Activated CD8-positive, alpha-beta T cell treated with anti-CD3 and anti-CD28 coated beads, Interleukin-2, amount 10 ng/mL, durations not matched to agents 7 days and 5 days (primary cell): ENCODE measurements at regions of chr12 and their contacts with region 1.

Region 1: GRCh38 chr12:48988030-48988649 is 10.0 kb downstream of the WNT1 start:
- DNase-seq: peak; percentile 84
- ATAC-seq: peak; percentile 81
- H3K4me3 Mint-ChIP-seq: no peak overlapping the region
- H3K27ac Mint-ChIP-seq: no peak overlapping the region
- H3K4me1 Mint-ChIP-seq: peaks cover 8% of the 10 kb centered on the region
- H3K27me3 Mint-ChIP-seq: peaks cover 65% of the 10 kb centered on the region

Region 2: GRCh38 chr12:47797441-47797840 is 1190.7 kb before region 1 on chr12:
- CTCF ChIA-PET with region 1: no interaction called
- POLR2A ChIA-PET with region 1: no interaction called
- DNase-seq: peak; percentile 57
- ATAC-seq: peak; percentile 73
- H3K4me3 Mint-ChIP-seq: no peak overlapping the region
- H3K27ac Mint-ChIP-seq: peak overlapping the region; percentile 83
- H3K4me1 Mint-ChIP-seq: peaks cover 47% of the 10 kb centered on the region
- H3K27me3 Mint-ChIP-seq: no peaks in the 10 kb centered on the region

Region 3: DNA sequence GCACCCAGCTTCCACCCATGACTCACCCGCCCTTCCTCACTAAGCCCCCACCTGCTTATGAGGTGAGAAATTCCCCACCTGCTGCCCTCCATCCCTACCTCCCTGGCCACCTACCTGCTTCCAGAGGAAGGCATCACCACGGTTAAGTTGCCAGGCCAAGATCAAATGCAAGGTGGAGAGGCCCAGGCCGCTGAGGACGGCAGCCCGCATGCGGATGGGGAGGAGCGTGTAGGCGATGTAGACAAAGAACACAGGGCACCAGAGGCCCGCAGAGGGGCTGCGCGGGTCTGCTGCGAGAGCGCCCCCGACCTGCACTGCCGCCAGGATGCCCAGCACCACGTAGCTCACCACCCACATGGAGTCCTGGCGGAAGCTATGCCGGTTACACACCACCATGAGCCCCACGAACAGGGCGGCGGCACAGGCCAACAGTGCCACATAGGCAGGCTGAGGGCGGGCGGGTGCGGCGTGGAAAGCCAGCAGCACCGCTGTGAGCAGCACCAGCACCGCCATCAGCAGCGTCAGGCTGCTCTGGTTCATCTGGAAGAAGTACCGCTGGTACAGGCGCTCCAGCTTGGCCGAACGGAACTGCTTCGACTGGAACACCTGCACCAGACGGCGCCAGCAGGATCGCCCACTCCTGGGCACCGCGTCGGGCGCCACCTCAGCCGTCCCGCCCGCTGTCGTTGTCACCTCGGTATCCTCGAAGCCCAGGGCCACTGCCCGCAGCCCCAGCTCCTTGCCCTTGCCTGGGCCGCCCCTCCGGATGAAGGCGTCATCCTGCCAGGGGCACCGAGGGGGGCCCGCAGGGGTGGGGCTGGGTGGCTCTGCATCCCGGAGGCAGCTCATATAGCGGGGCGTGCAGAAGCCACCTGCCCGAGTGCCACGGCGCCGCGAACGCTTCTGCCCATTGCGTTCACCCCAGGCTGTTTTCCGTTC is 205.4 kb before region 1 on chr12:
- CTCF ChIA-PET with region 1: no interaction called
- POLR2A ChIA-PET with region 1: no interaction called
- DNase-seq: no peak
- ATAC-seq: no peak
- H3K4me3 Mint-ChIP-seq: no peak overlapping the region
- H3K27ac Mint-ChIP-seq: no peak overlapping the region
- H3K4me1 Mint-ChIP-seq: no peaks in the 10 kb centered on the region
- H3K27me3 Mint-ChIP-seq: peaks cover 30% of the 10 kb centered on the region

Region 4: GRCh38 chr12:48795480-48796455 is 192.4 kb before region 1 on chr12:
- CTCF ChIA-PET with region 1: no interaction called
- POLR2A ChIA-PET with region 1: no interaction called
- DNase-seq: peak; percentile 70
- ATAC-seq: peak; percentile 72
- H3K4me3 Mint-ChIP-seq: no peak overlapping the region
- H3K27ac Mint-ChIP-seq: no peak overlapping the region
- H3K4me1 Mint-ChIP-seq: peaks cover 14% of the 10 kb centered on the region
- H3K27me3 Mint-ChIP-seq: peaks cover 14% of the 10 kb centered on the region

Region 5: DNA sequence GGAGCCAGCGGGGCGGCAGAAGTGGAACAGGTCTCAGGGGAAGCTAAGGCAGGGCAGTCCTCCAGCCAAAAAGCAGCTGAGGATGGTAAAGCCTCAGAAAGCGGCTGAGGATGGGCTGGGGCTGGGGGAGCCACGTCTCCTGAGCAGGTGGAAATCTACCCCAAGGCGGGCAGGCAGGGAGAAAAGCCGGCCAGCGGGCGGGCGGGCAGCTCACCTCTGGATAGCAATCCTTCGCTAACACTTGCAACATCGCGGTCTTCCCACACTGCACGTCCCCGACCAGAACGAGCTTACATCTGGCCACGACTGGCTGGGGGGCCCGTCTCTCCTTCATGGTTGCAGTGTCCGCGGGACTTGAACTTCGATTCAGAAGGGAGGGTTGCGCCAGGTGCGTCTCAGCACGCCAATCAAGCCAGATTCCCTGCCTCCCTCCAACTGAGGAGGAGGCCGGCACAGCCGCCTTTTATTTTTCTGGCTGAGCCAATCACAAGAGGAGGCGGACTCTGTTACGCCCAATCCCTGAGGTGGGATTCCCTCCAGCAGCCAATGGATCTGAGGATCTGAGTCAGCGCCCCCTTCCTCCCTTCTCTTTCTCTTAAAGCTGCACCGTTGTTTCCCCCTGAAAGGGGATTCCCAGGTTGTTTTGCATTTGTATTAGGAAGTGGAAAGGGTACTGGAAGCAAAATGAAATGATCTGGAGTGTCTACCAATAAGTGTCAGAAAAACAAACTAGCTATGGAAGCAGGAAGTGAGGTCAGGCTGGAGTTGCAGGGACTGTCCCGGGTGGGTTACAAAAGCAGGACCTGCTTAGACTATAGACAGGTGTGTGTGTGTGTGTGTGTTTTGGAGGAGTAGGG is 122.5 kb before region 1 on chr12 and contains the start of gene RND1:
- CTCF ChIA-PET with region 1: interaction called, 12 read pairs
- POLR2A ChIA-PET with region 1: interaction called, 4 read pairs
- DNase-seq: peak; percentile 88
- ATAC-seq: peak; percentile 98
- H3K4me3 Mint-ChIP-seq: peak within 1 kb of the TSS; percentile 81
- H3K27ac Mint-ChIP-seq: peak within 1 kb of the TSS; percentile 71
- H3K4me1 Mint-ChIP-seq: peaks cover 23% of the 10 kb centered on the region
- H3K27me3 Mint-ChIP-seq: peaks cover 25% of the 10 kb centered on the region
- total RNA-seq, gene RND1: 1.4 to 2.5 TPM

Region 6: DNA sequence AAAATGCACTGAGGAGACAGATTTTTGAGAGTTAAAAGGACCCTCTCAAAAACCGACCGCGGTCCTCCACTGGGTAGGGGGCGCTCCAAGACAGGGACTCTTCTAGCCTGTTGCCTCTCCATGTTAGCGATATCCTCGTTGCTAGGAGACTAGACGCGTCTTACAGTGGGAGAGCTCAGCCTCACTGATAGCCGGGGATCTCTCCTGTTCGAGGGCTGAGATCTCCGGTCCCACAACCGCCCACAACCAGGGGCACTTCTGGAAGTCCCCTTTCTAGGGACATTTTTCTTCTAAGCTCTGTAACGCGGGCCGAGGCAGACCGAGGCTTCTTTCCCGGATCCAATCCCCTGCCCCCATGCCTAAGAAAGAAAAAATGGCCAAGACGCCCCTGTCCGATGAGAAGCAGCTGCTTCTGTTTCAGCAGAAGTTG is 84.1 kb before region 1 on chr12:
- CTCF ChIA-PET with region 1: interaction called, 10 read pairs
- POLR2A ChIA-PET with region 1: no interaction called
- DNase-seq: peak; percentile 88
- ATAC-seq: peak; percentile 97
- H3K4me3 Mint-ChIP-seq: peak overlapping the region; percentile 64
- H3K27ac Mint-ChIP-seq: no peak overlapping the region
- H3K4me1 Mint-ChIP-seq: peaks cover 12% of the 10 kb centered on the region
- H3K27me3 Mint-ChIP-seq: peaks cover 12% of the 10 kb centered on the region

Region 7: DNA sequence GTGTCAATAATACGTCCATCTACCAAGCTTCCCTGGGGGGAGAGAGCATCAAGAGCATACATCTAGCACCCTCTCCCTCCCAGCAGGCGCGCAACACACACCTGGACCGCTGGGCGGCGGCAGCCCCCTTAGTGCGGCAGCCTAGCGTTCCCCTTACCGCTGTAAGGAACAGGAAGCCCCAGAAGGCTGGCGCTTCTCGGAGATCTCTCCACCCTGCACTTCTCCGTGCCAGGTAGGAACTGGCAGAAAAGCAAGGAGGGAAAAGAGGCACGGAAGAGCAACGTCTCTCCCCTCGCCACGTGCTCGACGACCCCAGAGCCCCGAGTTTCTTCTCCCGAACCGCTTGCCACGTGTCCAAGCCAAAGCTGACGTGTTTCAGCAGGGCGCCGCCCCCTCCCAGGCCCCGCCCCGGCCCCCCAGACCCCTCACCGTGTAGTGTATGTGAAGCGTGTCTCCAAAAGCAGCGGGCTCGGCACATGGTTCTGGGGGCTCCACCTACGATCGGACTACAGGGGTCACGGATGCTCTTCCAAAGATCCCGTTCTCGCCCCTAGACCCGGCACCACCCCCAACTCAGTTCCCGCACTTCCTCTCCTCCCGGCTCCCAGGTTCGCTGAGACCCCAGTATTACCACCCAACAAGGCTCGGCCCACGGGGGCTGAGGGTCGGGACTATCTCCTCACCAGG is 63.4 kb before region 1 on chr12:
- CTCF ChIA-PET with region 1: interaction called, 51 read pairs
- POLR2A ChIA-PET with region 1: interaction called, 4 read pairs
- DNase-seq: peak; percentile 85
- ATAC-seq: peak; percentile 87
- H3K4me3 Mint-ChIP-seq: peak overlapping the region; percentile 93
- H3K27ac Mint-ChIP-seq: peak overlapping the region; percentile 95
- H3K4me1 Mint-ChIP-seq: peaks cover 21% of the 10 kb centered on the region
- H3K27me3 Mint-ChIP-seq: no peaks in the 10 kb centered on the region

Region 8: DNA sequence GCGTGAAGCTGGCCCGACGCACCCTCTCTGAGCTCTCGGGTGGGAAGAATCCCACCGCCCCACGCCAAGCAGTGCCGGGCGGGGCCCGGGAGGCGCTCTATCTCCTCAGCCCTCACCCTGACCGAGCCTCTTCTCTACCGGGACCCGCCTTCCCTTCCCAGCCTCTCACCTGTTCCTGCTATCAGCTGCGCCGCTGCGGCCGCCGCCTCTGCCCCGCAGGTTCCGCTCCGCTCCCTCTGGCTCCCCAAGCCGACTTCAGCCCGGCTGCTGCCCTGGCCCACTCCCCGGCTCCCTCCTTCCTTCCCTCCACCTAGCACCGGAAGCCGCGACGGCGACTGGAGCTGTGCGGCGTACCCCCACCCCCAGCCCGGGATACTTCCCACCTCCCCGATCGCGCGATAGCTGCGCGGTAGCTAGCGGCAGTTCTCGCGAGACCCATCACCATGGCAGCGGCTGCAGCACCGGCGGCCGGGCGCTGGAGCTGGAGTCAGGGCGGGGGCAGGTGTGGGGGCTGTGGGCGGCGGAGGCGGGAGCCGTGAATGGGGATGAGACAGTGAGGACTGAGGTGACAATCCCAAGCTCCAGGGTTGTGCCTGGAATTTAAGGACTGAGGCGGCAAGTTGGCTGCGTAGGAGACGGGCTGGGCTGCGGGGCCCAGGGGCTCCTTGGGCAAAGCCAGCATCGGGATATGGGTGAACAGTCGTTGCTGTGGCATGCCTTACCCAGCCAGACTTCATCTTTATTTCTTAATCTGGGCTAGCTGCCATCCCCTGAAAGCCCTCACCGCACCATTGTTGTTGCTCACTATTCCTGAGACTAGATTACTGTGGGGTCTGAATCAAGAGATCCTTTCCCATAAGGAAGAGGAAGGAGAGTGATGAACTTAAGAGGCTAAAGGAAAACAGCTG is 30.7 kb before region 1 on chr12 and contains the start of gene ARF3:
- CTCF ChIA-PET with region 1: interaction called, 31 read pairs
- POLR2A ChIA-PET with region 1: interaction called, 3 read pairs
- DNase-seq: peak; percentile 95
- ATAC-seq: peak; percentile 96
- H3K4me3 Mint-ChIP-seq: peak within 1 kb of the TSS; percentile 94
- H3K27ac Mint-ChIP-seq: peak within 1 kb of the TSS; percentile 85
- H3K4me1 Mint-ChIP-seq: peaks cover 33% of the 10 kb centered on the region
- H3K27me3 Mint-ChIP-seq: peaks cover 14% of the 10 kb centered on the region
- total RNA-seq, gene ARF3: 104 to 108 TPM

Region 9: DNA sequence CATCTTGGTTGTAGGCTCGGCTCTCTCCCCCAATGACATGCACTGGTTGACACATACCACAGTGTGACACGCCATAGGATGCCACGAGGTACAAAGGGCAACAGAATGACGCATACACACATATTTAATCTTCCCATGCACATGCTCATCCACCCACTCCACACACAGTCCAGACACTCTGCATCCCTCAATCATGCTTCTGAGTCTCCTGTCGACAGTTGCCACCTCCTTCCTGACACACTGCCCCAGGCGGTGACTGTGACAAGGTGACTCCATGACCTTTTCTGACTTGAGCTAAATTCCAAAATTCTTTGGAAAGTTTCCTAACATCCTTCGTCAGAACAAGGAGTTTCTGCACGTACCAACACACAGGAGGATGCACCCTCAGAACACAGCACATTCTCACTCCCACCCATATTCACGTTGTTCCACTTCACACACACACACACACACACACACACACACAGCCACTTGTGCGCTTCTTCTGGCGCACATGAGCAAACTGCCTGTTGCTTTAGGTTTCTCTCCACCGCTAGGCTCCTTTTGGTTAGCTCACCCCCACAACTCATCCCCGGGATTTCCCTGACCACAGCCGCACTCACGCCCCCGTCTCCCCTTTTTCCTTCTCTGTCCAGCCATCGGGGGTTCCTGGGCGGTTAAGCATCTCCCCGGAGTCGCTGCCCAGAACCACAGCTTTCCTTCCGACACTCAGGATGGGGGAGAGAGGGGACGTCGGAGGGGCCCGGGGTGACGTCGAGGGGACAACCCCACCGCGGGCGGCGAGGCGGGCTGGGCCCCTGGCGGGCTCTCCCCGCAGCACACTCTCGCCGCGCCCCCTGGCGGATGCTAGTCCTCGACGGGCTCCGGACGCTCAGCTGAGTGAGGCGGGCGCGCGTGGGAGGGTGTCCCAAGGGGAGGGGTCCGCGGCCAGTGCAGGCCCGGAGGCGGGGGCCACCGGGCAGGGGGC is 10.5 kb before region 1 on chr12:
- CTCF ChIA-PET with region 1: interaction called, 77 read pairs
- POLR2A ChIA-PET with region 1: no interaction called
- DNase-seq: peak; percentile 80
- ATAC-seq: peak; percentile 54
- H3K4me3 Mint-ChIP-seq: peak overlapping the region; percentile 47
- H3K27ac Mint-ChIP-seq: peak overlapping the region; percentile 32
- H3K4me1 Mint-ChIP-seq: peaks cover 58% of the 10 kb centered on the region
- H3K27me3 Mint-ChIP-seq: peaks cover 72% of the 10 kb centered on the region

Region 10: DNA sequence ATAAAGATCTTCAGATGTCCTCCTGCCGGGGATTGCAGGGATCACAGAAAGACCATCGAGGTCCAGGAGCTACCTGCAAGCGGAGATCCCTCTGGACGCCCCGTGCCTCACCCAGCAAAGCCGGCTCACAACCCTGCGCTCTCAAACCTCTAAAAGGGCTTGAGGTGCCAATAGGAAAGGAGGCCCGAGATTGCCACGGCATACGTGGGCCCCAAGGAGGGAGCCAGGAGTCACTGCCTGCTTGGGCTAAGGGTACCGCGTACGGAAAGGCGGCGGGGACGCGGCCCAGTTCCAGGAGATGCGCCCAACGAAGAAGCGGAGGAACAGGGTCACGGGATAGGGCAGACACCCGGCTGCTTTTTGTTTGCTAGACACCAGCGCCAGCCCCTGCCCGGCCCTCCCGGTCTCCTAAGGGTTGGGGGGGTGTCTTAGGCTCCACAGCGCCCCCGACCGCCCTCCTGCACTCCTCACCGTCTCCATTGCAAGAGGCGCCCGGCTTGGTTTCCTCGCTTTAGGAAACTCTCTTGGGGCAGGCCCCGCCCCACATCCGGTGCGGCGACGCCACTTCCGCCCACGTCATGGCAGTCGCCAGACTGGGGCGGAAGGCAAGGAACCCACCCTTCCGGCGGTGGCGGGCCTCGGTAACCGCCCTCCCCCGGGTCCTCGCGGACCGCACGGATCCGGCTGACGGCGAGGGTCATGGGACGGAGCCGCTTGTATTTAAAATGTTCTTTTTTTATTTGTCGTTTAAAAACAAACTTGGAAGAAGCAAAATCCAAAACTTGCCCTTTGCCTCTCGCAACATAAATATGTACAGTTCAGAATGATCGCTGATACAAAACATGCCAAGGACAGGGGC is 30.4 kb after region 1 on chr12 and contains the start of gene PRKAG1:
- CTCF ChIA-PET with region 1: interaction called, 39 read pairs
- POLR2A ChIA-PET with region 1: no interaction called
- DNase-seq: peak; percentile 97
- ATAC-seq: peak; percentile 93
- H3K4me3 Mint-ChIP-seq: peak within 1 kb of the TSS; percentile 92
- H3K27ac Mint-ChIP-seq: peak within 1 kb of the TSS; percentile 98
- H3K4me1 Mint-ChIP-seq: peaks cover 33% of the 10 kb centered on the region
- H3K27me3 Mint-ChIP-seq: no peaks in the 10 kb centered on the region
- total RNA-seq, gene PRKAG1: 57.5 to 59.8 TPM